Calu3 (cell line): ENCODE measurements at regions of chr1 and their contacts with region 1.

Region 1: DNA sequence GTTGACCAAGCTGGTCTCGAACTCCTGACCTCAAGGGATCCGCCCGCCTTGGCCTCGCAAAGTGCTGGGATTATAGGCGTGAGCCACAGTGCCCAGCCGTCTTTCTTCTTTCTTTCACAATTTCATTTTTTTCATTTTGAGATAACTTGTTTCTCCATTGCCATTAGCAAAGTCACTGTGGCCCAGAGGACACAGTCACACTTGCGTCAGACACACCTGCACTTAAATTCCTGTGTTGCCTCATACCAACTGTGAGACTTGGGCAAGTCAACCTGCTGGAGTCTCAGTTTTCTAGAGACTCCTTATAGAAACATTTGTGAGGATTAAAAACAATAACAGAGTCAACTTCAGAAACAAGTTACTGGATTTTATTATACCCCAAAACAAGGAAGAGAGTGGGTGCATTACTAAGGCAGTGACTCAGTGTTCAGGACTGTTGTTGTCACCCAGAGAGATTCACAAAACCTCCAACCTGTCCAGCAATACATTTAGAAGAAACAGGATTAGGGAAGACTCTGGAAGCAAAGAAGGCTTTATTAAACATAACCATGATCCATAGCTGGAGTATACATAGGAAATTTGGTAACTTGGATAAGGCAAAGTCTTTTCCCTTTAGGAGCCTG is 2.6 kb downstream of the TEDDM1 start:
- DNase-seq: peak; percentile 20
- H3K4me3 Mint-ChIP-seq: no peak overlapping the region
- H3K27ac Mint-ChIP-seq: peak overlapping the region; percentile 16
- H3K4me1 Mint-ChIP-seq: peaks cover 22% of the 10 kb centered on the region
- H3K27me3 Mint-ChIP-seq: no peaks in the 10 kb centered on the region
- CTCF ChIP-seq: no peak

Region 2: DNA sequence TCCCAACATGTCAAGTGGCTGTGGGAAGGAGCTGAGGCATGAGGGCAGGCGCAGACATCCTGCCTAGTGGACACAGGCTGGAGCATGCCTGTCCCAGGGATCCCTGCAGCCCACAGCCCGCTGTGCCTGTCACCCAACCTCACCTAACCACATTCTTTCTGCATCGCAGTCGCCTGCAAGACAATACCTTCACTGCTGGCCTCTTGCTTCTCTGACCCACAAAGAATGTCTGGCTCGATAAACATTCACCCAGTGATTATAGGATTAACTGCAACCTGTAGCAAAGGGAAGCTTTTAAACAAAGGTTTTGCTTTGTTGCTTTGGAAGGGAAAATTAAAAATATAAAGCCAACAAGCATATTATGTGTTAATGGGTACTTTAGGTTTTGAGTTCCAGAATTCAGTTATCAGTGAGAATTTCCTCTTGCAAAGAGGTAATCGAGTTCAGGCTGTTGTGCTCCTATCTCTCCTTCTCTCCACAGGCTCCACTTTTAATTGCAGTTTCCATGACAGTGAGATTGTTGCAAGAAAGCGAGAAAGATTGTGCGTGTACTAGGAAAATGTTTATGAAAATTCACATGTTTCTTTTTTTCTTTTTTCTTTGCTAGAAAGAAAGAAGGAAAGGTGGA is 296.4 kb before region 1 on chr1:
- CTCF ChIA-PET with region 1: interaction called, 4 read pairs
- intact Hi-C with region 1: loop called (anchors 5 kb)
- DNase-seq: peak; percentile 91
- H3K4me3 Mint-ChIP-seq: peak overlapping the region; percentile 27
- H3K27ac Mint-ChIP-seq: peak overlapping the region; percentile 68
- H3K4me1 Mint-ChIP-seq: peaks cover 47% of the 10 kb centered on the region
- H3K27me3 Mint-ChIP-seq: no peaks in the 10 kb centered on the region
- CTCF ChIP-seq: no peak

Region 3: DNA sequence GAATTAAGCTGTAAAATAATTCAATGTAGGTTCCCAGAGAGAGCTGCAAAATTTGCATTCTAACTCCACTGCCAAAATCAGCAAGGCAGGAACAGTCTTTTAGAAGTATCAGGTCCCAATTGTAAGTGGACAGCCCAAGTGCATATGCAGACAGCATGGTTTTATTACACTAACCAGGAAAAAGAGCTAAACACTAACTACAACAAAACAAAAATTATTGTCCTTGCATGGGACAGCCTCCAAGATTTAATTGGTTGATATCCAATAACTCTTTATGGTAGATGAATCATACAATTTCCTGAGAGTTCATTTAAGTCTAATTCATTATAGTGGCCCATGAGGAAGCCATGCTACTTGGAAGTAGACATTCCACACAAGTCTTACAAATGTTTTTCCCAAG is 182.1 kb before region 1 on chr1:
- CTCF ChIA-PET with region 1: no interaction called
- intact Hi-C with region 1: loop called (anchors 5 kb)
- DNase-seq: no peak
- H3K4me3 Mint-ChIP-seq: no peak overlapping the region
- H3K27ac Mint-ChIP-seq: no peak overlapping the region
- H3K4me1 Mint-ChIP-seq: peaks cover 20% of the 10 kb centered on the region
- H3K27me3 Mint-ChIP-seq: no peaks in the 10 kb centered on the region
- CTCF ChIP-seq: no peak

Region 4: GRCh38 chr1:182301467-182302198 is 96.2 kb before region 1 on chr1:
- CTCF ChIA-PET with region 1: interaction called, 10 read pairs
- intact Hi-C with region 1: loop called (anchors 2 kb)
- DNase-seq: peak; percentile 57
- H3K4me3 Mint-ChIP-seq: no peak overlapping the region
- H3K27ac Mint-ChIP-seq: peak overlapping the region; percentile 43
- H3K4me1 Mint-ChIP-seq: peaks cover 31% of the 10 kb centered on the region
- H3K27me3 Mint-ChIP-seq: no peaks in the 10 kb centered on the region
- CTCF ChIP-seq: no peak

Region 5: GRCh38 chr1:182649041-182649440 is 251.2 kb after region 1 on chr1:
- CTCF ChIA-PET with region 1: no interaction called
- intact Hi-C with region 1: no loop called
- DNase-seq: no peak
- H3K4me3 Mint-ChIP-seq: no peak overlapping the region
- H3K27ac Mint-ChIP-seq: no peak overlapping the region
- H3K4me1 Mint-ChIP-seq: no peaks in the 10 kb centered on the region
- H3K27me3 Mint-ChIP-seq: peaks cover 17% of the 10 kb centered on the region
- CTCF ChIP-seq: no peak

Region 6: GRCh38 chr1:182768963-182769362 is 371.1 kb after region 1 on chr1:
- CTCF ChIA-PET with region 1: no interaction called
- intact Hi-C with region 1: no loop called
- DNase-seq: no peak
- H3K4me3 Mint-ChIP-seq: no peak overlapping the region
- H3K27ac Mint-ChIP-seq: no peak overlapping the region
- H3K4me1 Mint-ChIP-seq: no peaks in the 10 kb centered on the region
- H3K27me3 Mint-ChIP-seq: peaks cover 58% of the 10 kb centered on the region
- CTCF ChIP-seq: no peak